ENCODE measurements at regions of chr15 and their contacts with region 1.

Region 1: GRCh38 chr15:40323239-40323952 is at the start of gene INAFM2:
- DNase-seq: no peak
- H3K4me3 ChIP-seq: peak within 1 kb of the TSS; percentile 73
- CTCF ChIP-seq: peak; percentile 70

Region 2: GRCh38 chr15:40301467-40302179 is 21.8 kb before region 1 on chr15:
- CTCF ChIA-PET with region 1: interaction called, 385 read pairs
- POLR2A ChIA-PET with region 1: no interaction called
- DNase-seq: no peak
- H3K4me3 ChIP-seq: no peak overlapping the region
- CTCF ChIP-seq: no peak

Region 3: DNA sequence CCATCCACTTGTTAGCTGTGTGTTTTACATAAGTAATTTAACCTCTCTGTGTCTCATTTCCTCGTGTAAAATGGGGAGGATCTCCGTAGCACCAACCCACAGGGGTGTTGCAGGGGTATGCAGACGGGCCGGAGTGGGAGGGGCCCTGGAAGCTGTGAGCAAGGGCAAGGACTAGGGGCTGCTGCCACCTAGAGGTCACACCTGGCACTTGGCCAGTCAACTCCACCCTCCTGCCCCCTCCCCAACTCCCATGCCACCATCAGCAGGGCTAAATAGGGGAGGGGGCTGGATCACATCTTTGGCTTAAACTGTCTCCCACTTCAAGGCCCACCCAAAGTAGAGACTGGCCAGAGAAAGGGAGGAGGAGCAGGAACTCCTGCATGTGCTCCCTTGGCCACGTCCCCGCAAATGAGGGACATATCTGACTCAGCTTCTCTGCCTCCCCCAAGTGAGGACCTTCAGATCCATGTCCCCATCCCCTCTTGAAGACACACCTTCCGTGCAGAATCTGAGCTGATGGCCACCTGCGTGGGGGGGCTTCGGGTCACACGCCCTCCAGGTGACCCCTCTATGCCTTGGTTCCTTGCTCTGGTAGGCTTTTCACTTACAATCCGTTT is 14.8 kb after region 1 on chr15:
- CTCF ChIA-PET with region 1: interaction called, 385 read pairs
- POLR2A ChIA-PET with region 1: interaction called, 81 read pairs
- DNase-seq: no peak
- H3K4me3 ChIP-seq: peak overlapping the region; percentile 48
- CTCF ChIP-seq: peak; percentile 84

Region 4: GRCh38 chr15:40405501-40406381 is 82.3 kb after region 1 on chr15 and contains the start of gene IVD:
- CTCF ChIA-PET with region 1: interaction called, 31 read pairs
- POLR2A ChIA-PET with region 1: interaction called, 3 read pairs
- DNase-seq: peak; percentile 71
- H3K4me3 ChIP-seq: peak within 1 kb of the TSS; percentile 93
- CTCF ChIP-seq: no peak

Region 5: GRCh38 chr15:40534371-40534770 is 211.0 kb after region 1 on chr15:
- CTCF ChIA-PET with region 1: no interaction called
- POLR2A ChIA-PET with region 1: no interaction called
- DNase-seq: no peak
- H3K4me3 ChIP-seq: no peak overlapping the region
- CTCF ChIP-seq: no peak

Measured in AG04449 (cell line).